RWPE1 (cell line): ENCODE measurements at regions of chr19 and their contacts with region 1.

Region 1: GRCh38 chr19:46661020-46661731 is at the start of gene DACT3:
- DNase-seq: peak; percentile 99
- H3K27ac ChIP-seq: peak within 1 kb of the TSS; percentile 13
- CTCF ChIP-seq: no peak

Region 2: GRCh38 chr19:46610851-46611770 is 50.1 kb before region 1 on chr19:
- CTCF ChIA-PET with region 1: interaction called, 45 read pairs
- POLR2A ChIA-PET with region 1: no interaction called
- DNase-seq: no peak
- H3K27ac ChIP-seq: peak overlapping the region; percentile 17
- CTCF ChIP-seq: no peak

Region 3: DNA sequence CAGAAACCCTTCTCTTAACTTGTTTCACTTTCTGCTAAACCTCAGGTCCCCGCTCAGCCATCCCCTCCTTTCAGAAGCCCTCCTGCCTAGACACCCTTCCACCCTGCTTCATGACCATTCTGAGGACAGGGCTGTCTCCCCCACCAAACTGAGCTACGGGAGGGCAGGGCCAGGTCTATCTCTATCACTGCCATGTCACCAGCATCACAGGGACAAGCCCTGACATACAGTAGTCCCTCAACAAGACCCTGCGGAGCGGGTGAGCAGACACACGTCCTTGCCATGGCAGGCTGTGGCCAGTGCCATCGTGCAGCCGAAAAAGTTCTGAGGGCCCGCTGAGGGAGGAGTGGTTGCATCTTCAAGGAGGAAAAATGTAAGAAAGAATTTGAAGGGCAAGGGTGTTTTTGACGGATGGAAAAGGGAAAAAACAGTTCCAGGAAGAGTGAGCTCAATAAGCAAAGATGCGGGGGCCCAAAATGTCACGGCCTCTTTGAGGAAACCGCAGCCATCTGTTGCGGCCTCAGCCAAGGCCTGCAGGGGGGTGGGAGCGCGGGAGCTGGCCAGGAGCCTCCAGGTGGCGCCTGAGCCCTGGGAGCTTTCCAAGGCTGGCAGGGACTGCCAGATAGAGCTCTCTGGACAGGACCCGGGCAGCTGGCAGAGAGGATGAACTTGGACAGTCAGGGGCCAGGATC is 44.4 kb before region 1 on chr19:
- CTCF ChIA-PET with region 1: interaction called, 45 read pairs
- POLR2A ChIA-PET with region 1: no interaction called
- DNase-seq: peak; percentile 64
- H3K27ac ChIP-seq: no peak overlapping the region
- CTCF ChIP-seq: peak; percentile 68

Region 4: DNA sequence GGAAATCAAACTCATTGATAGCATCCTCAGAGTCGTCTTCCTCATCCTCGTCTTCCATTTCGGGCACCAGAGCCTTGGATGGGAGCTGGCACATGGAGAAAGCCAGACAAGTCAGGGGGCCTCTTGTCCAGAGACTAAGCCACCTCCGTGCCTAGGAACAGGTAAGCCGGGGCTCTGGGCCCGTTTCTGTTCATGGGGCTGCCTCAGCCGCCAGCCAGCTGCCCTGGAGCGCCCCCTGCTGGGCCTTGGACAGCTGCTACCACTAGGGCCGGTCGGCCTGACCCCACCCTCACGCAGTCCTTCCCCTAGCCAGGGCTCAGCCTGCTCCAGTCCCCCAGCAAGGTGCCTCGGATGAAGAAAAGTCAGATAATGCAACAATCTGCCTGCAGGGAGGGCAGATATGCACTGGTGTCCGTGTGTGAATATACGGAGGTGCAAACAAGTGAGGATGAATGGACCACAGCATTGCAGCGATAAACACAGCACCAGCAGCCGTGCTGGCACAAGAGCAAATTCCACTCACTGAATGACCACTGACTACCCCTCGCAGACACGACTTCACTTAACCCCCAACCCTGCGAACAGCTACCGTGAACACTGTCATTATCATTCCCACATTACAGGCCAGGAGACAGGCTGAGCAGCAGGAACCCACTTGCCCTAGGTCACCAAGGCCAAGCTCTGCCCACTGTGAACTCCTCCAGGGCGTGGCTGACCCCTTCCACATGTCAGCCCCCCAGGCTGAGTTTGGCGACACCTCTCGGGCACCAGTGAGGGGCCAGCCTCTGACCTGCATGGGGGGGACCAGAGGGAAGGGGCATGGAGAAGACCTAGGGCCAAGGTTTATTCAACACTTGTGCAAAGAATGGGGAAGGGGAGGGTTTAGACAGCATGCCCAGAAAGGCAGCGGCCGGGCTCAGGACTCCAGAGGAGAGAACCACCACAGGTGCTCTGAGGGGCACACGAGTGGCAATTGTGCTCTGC is 67.8 kb after region 1 on chr19:
- CTCF ChIA-PET with region 1: no interaction called
- POLR2A ChIA-PET with region 1: no interaction called
- DNase-seq: peak; percentile 39
- H3K27ac ChIP-seq: peak overlapping the region; percentile 45
- CTCF ChIP-seq: peak; percentile 89